Activated B cell treated with CpG ODN at 0.5 μM for 24 hours (primary cell): ENCODE measurements at regions of chr19 and their contacts with region 1.

Region 1: DNA sequence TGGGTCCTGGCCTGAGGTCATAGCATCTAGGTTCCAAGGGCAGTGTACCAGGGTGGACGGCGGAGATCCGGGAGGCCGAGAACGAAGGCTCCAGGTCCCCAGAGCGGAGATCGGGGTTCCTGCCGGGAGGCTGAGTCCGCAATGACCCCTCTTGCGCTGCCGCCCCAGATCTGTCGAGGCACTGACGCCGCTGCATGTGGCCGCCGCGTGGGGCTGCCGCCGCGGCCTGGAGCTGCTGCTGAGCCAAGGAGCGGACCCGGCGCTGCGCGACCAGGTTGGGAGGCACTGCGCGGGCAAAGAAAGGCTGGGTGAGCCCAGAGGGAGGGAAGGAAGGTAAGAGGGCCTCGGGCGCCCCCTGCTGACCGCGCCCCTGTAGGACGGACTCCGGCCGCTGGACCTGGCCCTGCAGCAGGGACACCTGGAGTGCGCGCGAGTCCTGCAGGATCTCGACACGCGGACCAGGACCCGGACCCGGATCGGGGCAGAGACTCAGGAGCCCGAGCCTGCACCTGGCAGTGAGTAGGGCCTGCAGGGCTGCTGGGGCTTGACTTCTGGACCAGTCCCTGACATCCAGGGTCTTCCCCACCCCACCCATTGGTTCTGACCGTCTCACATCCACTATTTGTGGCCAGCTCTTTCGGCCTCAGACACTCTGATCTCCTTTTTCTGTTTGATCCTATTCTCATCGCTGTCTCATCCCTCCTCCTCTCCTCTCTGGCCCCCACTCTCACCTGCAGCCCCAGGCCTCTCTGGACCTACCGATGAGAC is 971 bp downstream of the ANKLE1 start:
- DNase-seq: peak; percentile 79
- ATAC-seq: peak; percentile 84
- H3K4me3 Mint-ChIP-seq: peak overlapping the region; percentile 85
- H3K27ac Mint-ChIP-seq: no peak overlapping the region
- H3K4me1 Mint-ChIP-seq: peaks cover 12% of the 10 kb centered on the region
- H3K27me3 Mint-ChIP-seq: no peaks in the 10 kb centered on the region
- CTCF ChIP-seq: peak; percentile 52

Region 2: GRCh38 chr19:16714702-16715287 is 567.9 kb before region 1 on chr19:
- CTCF ChIA-PET with region 1: interaction called, 3 read pairs
- POLR2A ChIA-PET with region 1: interaction called, 3 read pairs
- intact Hi-C with region 1: loop called (anchors 1 kb)
- DNase-seq: peak; percentile 47
- ATAC-seq: peak; percentile 20
- H3K4me3 Mint-ChIP-seq: peak overlapping the region; percentile 42
- H3K27ac Mint-ChIP-seq: peak overlapping the region; percentile 81
- H3K4me1 Mint-ChIP-seq: peaks cover 54% of the 10 kb centered on the region
- H3K27me3 Mint-ChIP-seq: no peaks in the 10 kb centered on the region
- CTCF ChIP-seq: peak; percentile 94

Region 3: GRCh38 chr19:16771618-16772017 is 511.1 kb before region 1 on chr19:
- CTCF ChIA-PET with region 1: no interaction called
- POLR2A ChIA-PET with region 1: no interaction called
- intact Hi-C with region 1: loop called (anchors 1 kb)
- DNase-seq: peak; percentile 48
- ATAC-seq: peak; percentile 75
- H3K4me3 Mint-ChIP-seq: no peak overlapping the region
- H3K27ac Mint-ChIP-seq: no peak overlapping the region
- H3K4me1 Mint-ChIP-seq: peaks cover 1% of the 10 kb centered on the region
- H3K27me3 Mint-ChIP-seq: peaks cover 3% of the 10 kb centered on the region
- CTCF ChIP-seq: no peak

Region 4: GRCh38 chr19:16836115-16837034 is 446.3 kb before region 1 on chr19:
- CTCF ChIA-PET with region 1: interaction called, 3 read pairs
- POLR2A ChIA-PET with region 1: no interaction called
- intact Hi-C with region 1: loop called (anchors 1 kb)
- DNase-seq: peak; percentile 29
- ATAC-seq: peak; percentile 81
- H3K4me3 Mint-ChIP-seq: no peak overlapping the region
- H3K27ac Mint-ChIP-seq: peak overlapping the region; percentile 80
- H3K4me1 Mint-ChIP-seq: peaks cover 42% of the 10 kb centered on the region
- H3K27me3 Mint-ChIP-seq: no peaks in the 10 kb centered on the region
- CTCF ChIP-seq: no peak

Region 5: GRCh38 chr19:17205237-17206140 is 77.2 kb before region 1 on chr19:
- CTCF ChIA-PET with region 1: interaction called, 5 read pairs
- POLR2A ChIA-PET with region 1: no interaction called
- intact Hi-C with region 1: loop called (anchors 1 kb)
- DNase-seq: peak; percentile 48
- ATAC-seq: peak; percentile 72
- H3K4me3 Mint-ChIP-seq: no peak overlapping the region
- H3K27ac Mint-ChIP-seq: no peak overlapping the region
- H3K4me1 Mint-ChIP-seq: peaks cover 15% of the 10 kb centered on the region
- H3K27me3 Mint-ChIP-seq: no peaks in the 10 kb centered on the region
- CTCF ChIP-seq: no peak

Region 6: GRCh38 chr19:17260842-17261325 is 21.8 kb before region 1 on chr19:
- CTCF ChIA-PET with region 1: interaction called, 19 read pairs
- POLR2A ChIA-PET with region 1: interaction called, 40 read pairs
- intact Hi-C with region 1: loop called (anchors 1 kb)
- DNase-seq: peak; percentile 83
- ATAC-seq: peak; percentile 100
- H3K4me3 Mint-ChIP-seq: no peak overlapping the region
- H3K27ac Mint-ChIP-seq: no peak overlapping the region
- H3K4me1 Mint-ChIP-seq: peaks cover 11% of the 10 kb centered on the region
- H3K27me3 Mint-ChIP-seq: no peaks in the 10 kb centered on the region
- CTCF ChIP-seq: peak; percentile 74